ENCODE measurements at regions of chr20 and their contacts with region 1.

Region 1: DNA sequence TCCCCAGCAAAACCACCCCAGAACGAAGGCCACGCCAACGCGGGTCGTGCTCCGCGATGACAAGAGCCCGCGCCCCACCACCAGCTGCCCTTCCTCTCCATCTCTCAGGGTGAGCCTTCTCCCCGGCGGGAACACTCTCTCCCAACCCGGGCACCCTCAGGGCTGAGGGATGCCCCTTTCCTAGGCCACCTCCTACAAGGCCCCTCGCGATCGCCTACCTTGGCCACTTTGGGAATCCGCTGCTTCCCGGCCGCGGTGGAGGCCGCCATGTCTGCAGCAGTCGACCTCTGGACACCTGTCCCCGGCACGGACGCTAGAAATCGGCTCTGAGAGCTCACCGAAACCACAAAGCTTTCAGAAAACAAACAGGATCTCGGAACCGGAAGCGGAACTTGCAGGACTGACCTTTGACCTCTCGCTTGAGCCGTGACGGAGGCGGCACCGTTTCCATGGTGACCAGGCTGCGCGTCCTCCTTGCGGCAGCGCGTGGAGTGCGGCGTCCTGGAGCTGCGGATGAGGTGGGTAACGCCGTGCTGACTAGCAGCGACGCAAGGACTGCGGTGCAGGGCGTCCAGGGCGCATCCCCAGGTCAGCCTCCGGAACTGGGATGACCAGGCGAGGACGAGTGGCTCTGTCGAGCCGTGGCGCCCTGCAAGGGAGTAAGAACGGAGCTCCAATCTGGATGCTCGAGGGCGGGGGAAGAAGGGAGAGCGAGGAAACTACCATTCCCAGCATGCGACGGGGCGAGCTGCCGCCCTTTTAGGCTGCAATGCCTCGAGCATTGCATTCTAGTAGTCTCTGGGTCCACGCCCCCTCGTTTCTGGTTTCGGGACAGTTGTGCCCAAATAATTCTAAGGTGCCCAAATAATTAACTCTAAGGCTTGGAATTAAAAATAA is at the starts of genes CFAP61 and CRNKL1:
- DNase-seq: peak; percentile 94
- ATAC-seq: peak; percentile 94
- H3K4me3 Mint-ChIP-seq: peak within 1 kb of the TSS; percentile 96
- H3K27ac Mint-ChIP-seq: peak within 1 kb of the TSS; percentile 93
- H3K4me1 Mint-ChIP-seq: peaks cover 26% of the 10 kb centered on the region
- H3K27me3 Mint-ChIP-seq: no peaks in the 10 kb centered on the region
- CTCF ChIP-seq: no peak
- total RNA-seq, gene CFAP61: not detected in 2 replicates
- total RNA-seq, gene CRNKL1: 21.3 and 22.3 TPM in 2 replicates

Region 2: DNA sequence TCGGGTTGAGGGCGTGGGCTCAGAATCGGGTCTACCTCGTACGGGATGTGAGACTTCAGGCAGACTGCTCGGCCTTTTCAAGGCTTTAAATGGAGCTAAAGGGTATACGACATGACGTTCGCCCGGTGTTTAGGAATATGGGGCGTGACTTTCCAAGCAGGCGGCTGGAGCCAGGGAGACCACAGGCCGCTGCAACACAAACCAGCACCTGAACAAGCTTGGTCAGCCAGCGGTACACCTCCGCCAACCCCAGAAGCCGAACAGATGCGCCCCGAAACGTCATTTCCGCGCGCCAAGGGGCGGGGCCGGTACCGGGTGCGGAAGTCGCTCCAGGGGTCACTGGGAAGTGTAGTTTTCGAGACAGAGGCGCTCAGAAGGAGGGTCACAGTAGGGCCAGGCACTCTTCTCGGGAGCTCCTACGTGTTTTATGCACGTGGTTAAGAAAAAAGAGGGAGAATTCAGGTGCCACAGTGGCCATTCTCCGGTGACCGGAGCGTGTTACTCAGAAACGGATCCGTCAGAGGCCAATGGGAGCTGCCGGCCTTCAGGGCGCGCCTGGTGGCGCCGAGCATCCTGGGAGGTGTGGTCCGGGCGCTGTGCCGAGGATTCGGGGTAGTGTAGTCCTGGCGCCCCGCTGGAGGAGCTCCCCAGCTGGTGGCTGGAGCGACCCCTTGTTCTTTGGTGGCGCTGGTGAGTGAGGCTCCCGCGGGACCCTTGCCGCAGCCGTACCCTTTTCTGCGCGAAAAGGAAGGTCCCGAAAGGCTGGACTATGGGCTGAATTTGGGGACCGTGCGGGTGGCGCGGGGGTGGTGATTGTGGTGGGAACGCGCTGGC is 1764.2 kb before region 1 on chr20 and contains the start of gene ZNF133:
- CTCF ChIA-PET with region 1: no interaction called
- POLR2A ChIA-PET with region 1: interaction called, 3 read pairs
- intact Hi-C with region 1: loop called (anchors 1 kb)
- DNase-seq: peak; percentile 99
- ATAC-seq: peak; percentile 96
- H3K4me3 Mint-ChIP-seq: peak within 1 kb of the TSS; percentile 92
- H3K27ac Mint-ChIP-seq: peak within 1 kb of the TSS; percentile 97
- H3K4me1 Mint-ChIP-seq: peaks cover 29% of the 10 kb centered on the region
- H3K27me3 Mint-ChIP-seq: peaks cover 16% of the 10 kb centered on the region
- CTCF ChIP-seq: no peak
- total RNA-seq, gene ZNF133: 7.7 and 8.0 TPM in 2 replicates

Region 3: GRCh38 chr20:18566892-18567742 is 1485.2 kb before region 1 on chr20 and contains the start of gene SMIM26:
- CTCF ChIA-PET with region 1: no interaction called
- POLR2A ChIA-PET with region 1: no interaction called
- intact Hi-C with region 1: loop called (anchors 1 kb)
- DNase-seq: peak; percentile 91
- ATAC-seq: peak; percentile 96
- H3K4me3 Mint-ChIP-seq: peak within 1 kb of the TSS; percentile 94
- H3K27ac Mint-ChIP-seq: peak within 1 kb of the TSS; percentile 94
- H3K4me1 Mint-ChIP-seq: peaks cover 23% of the 10 kb centered on the region
- H3K27me3 Mint-ChIP-seq: no peaks in the 10 kb centered on the region
- CTCF ChIP-seq: no peak
- total RNA-seq, gene SMIM26: 48.9 and 51.7 TPM in 2 replicates

Region 4: GRCh38 chr20:19835533-19836222 is 216.6 kb before region 1 on chr20:
- CTCF ChIA-PET with region 1: no interaction called
- POLR2A ChIA-PET with region 1: no interaction called
- intact Hi-C with region 1: no loop called
- DNase-seq: no peak
- ATAC-seq: no peak
- H3K4me3 Mint-ChIP-seq: no peak overlapping the region
- H3K27ac Mint-ChIP-seq: no peak overlapping the region
- H3K4me1 Mint-ChIP-seq: peaks cover 9% of the 10 kb centered on the region
- H3K27me3 Mint-ChIP-seq: peaks cover 12% of the 10 kb centered on the region
- CTCF ChIP-seq: no peak

Region 5: DNA sequence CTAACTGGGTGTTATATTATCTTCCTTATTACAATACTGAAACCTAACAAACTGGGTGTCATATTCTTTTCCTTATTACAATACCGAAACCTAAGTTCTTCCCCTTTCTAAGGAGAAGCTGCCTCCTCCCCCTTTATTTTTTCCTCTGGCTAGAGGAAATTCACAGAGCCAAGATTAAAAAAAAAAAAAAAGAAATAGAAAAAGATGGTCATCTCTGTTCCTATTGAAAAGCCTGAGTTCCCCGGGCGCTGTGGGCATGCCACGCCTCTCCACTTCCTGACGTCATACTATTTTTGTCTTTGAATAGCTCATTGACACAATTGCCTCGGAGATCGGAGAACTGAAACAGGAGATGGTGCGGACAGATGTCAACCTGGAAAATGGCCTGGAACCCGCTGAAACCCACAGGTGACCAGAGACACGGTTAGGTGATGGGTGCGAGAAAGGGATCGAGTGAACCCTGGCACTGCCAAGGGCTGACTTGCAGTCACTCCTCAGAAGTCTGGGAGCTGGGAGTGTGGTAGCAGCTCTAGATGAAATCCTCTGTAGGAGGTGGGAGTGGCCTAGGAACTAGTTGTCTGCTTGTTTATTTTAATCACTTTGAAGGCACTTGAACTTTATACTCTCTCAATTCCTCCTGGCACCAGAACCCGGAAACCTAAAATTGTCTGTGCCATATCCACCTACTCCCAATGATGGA is 117.4 kb before region 1 on chr20:
- CTCF ChIA-PET with region 1: no interaction called
- POLR2A ChIA-PET with region 1: interaction called, 5 read pairs
- intact Hi-C with region 1: loop called (anchors 2 kb)
- DNase-seq: peak; percentile 30
- ATAC-seq: peak; percentile 67
- H3K4me3 Mint-ChIP-seq: peak overlapping the region; percentile 72
- H3K27ac Mint-ChIP-seq: peak overlapping the region; percentile 71
- H3K4me1 Mint-ChIP-seq: peaks cover 48% of the 10 kb centered on the region
- H3K27me3 Mint-ChIP-seq: no peaks in the 10 kb centered on the region
- CTCF ChIP-seq: no peak

Region 6: DNA sequence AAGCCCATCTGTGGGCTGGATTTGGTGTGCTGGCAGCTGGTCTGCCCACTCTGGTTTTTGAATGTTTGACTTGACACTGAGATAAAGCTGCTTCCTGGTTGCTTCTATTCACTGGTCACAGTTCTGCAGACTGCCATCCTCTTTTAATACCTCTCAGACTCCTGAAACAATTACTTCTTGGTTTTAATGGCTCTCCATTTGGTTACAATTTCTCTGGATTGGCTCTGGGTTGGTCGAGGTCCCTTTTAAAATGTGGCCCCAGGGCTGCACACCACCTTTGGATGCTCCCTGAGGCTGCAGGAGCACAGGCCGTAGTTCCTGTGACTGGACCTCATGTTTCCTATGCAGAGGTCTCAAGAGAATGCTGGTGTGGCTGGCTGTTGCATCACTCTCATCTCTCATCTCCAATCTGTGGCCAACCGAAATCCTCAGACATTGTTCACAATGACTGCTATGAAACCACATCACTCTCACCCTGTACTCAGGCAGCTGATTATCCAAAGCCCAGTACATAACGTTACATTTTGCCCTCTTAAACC is 414.1 kb after region 1 on chr20:
- CTCF ChIA-PET with region 1: no interaction called
- POLR2A ChIA-PET with region 1: interaction called, 3 read pairs
- intact Hi-C with region 1: loop called (anchors 10 kb)
- DNase-seq: peak; percentile 30
- ATAC-seq: peak; percentile 76
- H3K4me3 Mint-ChIP-seq: peak overlapping the region; percentile 50
- H3K27ac Mint-ChIP-seq: peak overlapping the region; percentile 93
- H3K4me1 Mint-ChIP-seq: peaks cover 57% of the 10 kb centered on the region
- H3K27me3 Mint-ChIP-seq: no peaks in the 10 kb centered on the region
- CTCF ChIP-seq: no peak

Region 7: DNA sequence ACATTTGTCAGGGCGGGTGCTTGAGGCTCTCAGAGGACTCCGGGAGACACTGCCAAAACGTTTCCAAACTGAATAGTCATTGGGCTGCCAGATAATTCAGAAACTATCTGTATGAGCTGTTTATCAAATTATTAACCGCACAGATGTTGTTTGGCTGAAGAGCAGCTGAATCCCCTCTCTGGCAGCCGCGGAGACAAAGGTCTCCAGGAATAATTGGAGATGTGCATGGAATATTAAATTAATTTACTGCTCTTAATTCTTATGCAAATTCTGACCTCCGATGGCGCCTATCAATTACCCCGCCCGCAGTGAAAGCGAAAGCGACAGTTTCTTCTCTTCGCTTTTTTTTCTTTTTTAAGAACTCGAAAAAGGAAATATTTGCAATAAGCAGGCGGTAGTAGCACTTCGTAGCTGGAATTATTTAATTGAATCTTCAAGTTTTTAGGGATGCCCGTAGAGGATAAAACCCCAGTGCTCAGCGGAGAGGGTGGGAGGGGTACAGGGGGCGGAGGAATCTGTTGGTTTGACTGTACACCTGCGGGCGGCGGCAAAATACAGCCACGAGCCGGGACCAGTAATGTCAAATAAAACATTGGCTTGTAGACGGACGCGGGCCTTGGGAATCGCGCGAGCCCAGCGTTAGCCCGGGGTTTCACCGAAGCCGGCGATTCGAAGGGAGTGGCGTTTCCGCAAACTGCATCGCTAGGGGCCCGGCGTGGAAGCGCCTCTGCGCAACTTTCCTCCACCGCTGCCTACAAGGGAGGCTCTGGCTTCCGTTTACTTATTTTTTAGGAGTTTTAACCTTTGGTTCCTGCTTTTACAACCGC is 1047.6 kb after region 1 on chr20:
- CTCF ChIA-PET with region 1: no interaction called
- POLR2A ChIA-PET with region 1: no interaction called
- intact Hi-C with region 1: loop called (anchors 1 kb)
- DNase-seq: peak; percentile 42
- ATAC-seq: peak; percentile 57
- H3K4me3 Mint-ChIP-seq: peak overlapping the region; percentile 88
- H3K27ac Mint-ChIP-seq: peak overlapping the region; percentile 83
- H3K4me1 Mint-ChIP-seq: peaks cover 36% of the 10 kb centered on the region
- H3K27me3 Mint-ChIP-seq: peaks cover 72% of the 10 kb centered on the region
- CTCF ChIP-seq: no peak

Region 8: DNA sequence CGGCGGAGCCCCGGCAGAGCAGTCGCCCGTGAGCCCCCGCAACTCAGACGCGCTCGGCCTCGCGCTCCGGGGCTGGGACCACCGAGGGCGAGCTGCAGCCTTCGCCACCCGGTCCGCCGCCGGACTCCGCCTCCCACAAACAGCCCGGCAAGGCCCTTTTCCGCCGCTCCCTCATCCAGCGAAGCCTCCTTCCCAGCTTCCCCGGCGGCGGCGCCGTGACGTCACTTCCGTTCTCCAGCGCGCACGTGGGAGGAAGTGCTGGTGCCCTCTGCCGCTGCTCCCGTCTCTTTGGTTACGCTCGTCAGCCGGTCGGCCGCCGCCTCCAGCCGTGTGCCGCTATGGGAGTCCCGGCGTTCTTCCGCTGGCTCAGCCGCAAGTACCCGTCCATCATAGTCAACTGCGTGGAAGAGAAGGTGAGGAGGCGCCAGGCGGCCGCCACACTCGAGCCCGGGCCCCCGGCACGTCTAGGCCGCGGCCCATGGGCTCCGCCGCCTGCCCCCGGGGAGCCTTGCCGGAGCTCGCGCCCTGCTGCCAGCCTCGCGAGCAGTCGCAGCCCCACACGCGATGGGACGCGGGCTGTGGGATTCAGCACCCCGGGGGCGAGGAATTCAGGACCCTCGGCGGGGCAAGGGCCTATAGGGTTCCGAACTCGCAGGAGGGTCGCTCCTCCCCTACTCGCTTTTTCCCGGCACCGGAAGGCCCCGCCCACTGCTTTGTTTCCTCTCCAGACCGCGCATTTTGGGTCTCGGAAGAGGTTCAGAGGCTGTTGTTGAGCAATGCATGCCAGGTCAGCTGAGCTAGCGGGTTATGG is 1250.9 kb after region 1 on chr20 and contains the start of gene XRN2:
- CTCF ChIA-PET with region 1: no interaction called
- POLR2A ChIA-PET with region 1: interaction called, 3 read pairs
- intact Hi-C with region 1: loop called (anchors 5 kb)
- DNase-seq: peak; percentile 93
- ATAC-seq: peak; percentile 85
- H3K4me3 Mint-ChIP-seq: peak within 1 kb of the TSS; percentile 98
- H3K27ac Mint-ChIP-seq: peak within 1 kb of the TSS; percentile 98
- H3K4me1 Mint-ChIP-seq: peaks cover 30% of the 10 kb centered on the region
- H3K27me3 Mint-ChIP-seq: no peaks in the 10 kb centered on the region
- CTCF ChIP-seq: no peak
- total RNA-seq, gene XRN2: 60.7 and 61.0 TPM in 2 replicates